Activated T-helper 1 cell treated with anti-CD3 and anti-CD28 coated beads, Interleukin-12 subunit alpha, Interleukin-12 subunit beta, Interleukin-2, Interleukin-4 antibody, amounts not matched to agents 30 ng/mL and 10 ng/mL and 1 ng/mL, durations not matched to agents 14 hours and 24 hours and 36 hours (primary cell): ENCODE measurements at regions of chr13 and their contacts with region 1.

Region 1: GRCh38 chr13:99386911-99387788 is 80.0 kb upstream of the GPR183 start:
- DNase-seq: peak; percentile 62
- H3K4me3 Mint-ChIP-seq: no peak overlapping the region
- H3K27ac Mint-ChIP-seq: peak overlapping the region; percentile 64
- H3K4me1 Mint-ChIP-seq: peaks cover 39% of the 10 kb centered on the region
- H3K27me3 Mint-ChIP-seq: no peaks in the 10 kb centered on the region

Region 2: DNA sequence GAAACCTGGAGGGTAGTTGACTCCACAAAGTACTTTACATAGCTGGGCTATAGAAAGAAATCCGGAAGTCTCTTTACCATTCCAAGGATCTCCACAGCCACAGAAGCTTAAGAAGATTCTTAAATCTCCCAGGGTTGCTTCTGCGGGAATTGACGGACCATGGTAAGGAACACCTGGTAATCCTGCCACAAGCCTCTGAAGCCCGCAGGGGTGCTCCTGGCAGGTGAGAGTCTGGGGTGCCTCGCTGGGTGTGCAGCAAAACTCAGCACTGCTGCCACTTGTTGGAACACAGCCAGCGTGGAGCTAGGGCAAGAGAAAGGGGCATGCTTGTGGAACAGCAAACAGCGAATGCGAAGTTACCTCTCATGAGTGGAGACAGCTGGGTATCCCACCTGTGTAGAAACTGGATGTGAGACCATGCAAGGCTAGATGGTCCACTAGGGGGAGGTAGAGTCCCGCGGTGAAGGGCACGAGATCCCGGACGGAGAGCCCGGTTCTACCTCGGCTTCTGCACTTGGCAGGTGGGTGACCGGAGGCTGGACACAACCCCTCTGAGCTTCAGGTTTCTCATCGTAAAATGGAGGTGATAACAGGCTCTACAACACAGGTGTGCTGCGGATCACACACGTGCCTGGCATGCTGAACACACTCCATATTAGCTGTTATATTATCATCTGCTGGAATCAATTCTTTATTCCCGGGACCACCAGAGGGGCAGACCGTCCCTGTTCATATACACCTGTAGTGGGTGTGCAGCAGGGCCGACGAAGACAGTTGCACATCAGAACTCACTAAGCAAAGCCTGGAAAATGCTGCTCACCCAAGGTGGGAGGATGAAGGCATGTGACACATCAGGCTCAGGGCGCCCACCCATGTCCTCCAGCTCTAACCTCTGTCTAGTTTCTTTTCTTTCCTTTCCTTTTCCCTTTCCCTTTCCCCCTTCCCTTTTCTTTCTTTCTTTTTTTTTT is 210.6 kb before region 1 on chr13:
- intact Hi-C with region 1: loop called (anchors 1 kb)
- DNase-seq: peak; percentile 59
- H3K4me3 Mint-ChIP-seq: peak overlapping the region; percentile 40
- H3K27ac Mint-ChIP-seq: no peak overlapping the region
- H3K4me1 Mint-ChIP-seq: peaks cover 24% of the 10 kb centered on the region
- H3K27me3 Mint-ChIP-seq: peaks cover 17% of the 10 kb centered on the region

Region 3: GRCh38 chr13:99269627-99270241 is 117.4 kb before region 1 on chr13:
- intact Hi-C with region 1: loop called (anchors 1 kb)
- DNase-seq: no peak
- H3K4me3 Mint-ChIP-seq: no peak overlapping the region
- H3K27ac Mint-ChIP-seq: no peak overlapping the region
- H3K4me1 Mint-ChIP-seq: peaks cover 55% of the 10 kb centered on the region
- H3K27me3 Mint-ChIP-seq: no peaks in the 10 kb centered on the region

Region 4: DNA sequence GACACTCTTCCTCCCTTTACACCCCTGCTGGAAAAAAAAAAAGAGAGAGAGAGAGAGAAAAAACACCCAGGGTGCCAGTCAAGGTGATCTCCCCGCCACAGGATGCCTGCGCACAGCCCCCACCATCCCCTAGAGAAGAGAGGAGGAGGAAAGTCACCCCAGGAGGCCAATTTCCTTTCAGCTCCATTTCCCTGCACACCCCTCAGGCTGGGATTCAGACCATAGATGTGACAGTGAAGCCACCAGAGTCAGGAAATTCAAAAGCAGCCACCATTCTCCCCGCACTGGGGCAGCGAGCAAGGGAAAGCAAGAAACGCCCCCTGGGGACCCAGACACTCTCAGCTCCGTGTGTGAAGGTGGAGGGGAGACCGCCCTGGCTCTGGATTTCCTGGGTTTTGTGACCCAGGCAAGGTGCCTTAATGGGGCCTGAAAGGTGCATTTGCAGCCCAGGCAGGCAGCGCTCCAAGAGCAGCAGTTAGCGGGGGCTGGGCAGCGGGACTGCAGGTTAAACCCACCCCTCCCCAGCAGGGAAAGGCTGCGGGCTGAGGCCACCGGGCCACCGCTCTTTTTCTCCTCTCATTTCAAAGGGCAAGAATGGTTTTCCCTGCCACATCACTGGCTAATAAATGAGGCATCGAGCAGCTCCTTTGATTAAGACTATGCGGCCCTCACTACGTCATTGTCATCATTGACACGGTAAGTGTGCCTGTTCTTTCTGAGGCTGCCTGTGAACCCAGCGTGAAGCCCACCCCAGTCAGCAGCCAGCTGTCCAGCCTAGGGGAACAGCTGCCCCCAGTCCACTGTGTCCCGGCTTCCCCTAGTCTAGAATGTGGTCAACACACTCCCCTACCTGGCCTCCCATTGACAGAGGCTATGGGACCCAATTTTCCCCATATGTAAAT is 30.3 kb after region 1 on chr13:
- intact Hi-C with region 1: loop called (anchors 1 kb)
- DNase-seq: no peak
- H3K4me3 Mint-ChIP-seq: no peak overlapping the region
- H3K27ac Mint-ChIP-seq: no peak overlapping the region
- H3K4me1 Mint-ChIP-seq: peaks cover 46% of the 10 kb centered on the region
- H3K27me3 Mint-ChIP-seq: peaks cover 7% of the 10 kb centered on the region

Region 5: DNA sequence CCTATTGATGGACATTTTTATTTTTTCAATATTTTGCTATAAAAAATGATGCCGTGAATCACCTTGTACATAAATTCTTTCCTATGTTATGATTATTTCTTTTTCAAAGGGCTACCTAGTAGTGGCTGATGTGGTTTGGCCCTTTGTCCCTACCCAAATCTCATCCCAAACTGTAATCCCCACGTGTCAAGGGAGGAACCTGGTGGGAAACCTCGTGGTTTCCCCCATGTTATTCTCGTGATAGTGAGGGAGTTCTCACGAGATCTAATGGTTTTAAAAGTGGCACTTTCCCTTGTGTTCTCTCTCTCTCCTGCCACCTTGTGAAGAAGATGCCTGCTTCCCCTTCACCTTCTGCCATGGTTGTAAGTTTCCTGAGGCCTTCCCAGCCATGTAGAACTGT is 209.0 kb after region 1 on chr13:
- intact Hi-C with region 1: no loop called
- DNase-seq: no peak
- H3K4me3 Mint-ChIP-seq: no peak overlapping the region
- H3K27ac Mint-ChIP-seq: no peak overlapping the region
- H3K4me1 Mint-ChIP-seq: peaks cover 4% of the 10 kb centered on the region
- H3K27me3 Mint-ChIP-seq: peaks cover 8% of the 10 kb centered on the region

Region 6: GRCh38 chr13:99980201-99980823 is 593.2 kb after region 1 on chr13:
- intact Hi-C with region 1: no loop called
- DNase-seq: peak; percentile 49
- H3K4me3 Mint-ChIP-seq: no peak overlapping the region
- H3K27ac Mint-ChIP-seq: no peak overlapping the region
- H3K4me1 Mint-ChIP-seq: peaks cover 16% of the 10 kb centered on the region
- H3K27me3 Mint-ChIP-seq: peaks cover 65% of the 10 kb centered on the region